OCI-LY7 (cell line): ENCODE measurements at regions of chr1 and their contacts with region 1.

Region 1: GRCh38 chr1:60126723-60127122 is 53.2 kb upstream of the C1orf87 start:
- DNase-seq: no peak
- H3K4me3 ChIP-seq: no peak overlapping the region
- H3K27ac ChIP-seq: no peak overlapping the region
- H3K4me1 ChIP-seq: no peaks in the 10 kb centered on the region
- CTCF ChIP-seq: no peak

Region 2: GRCh38 chr1:58857680-58858673 is 1268.7 kb before region 1 on chr1:
- CTCF ChIA-PET with region 1: no interaction called
- POLR2A ChIA-PET with region 1: interaction called, 12 read pairs
- intact Hi-C with region 1: no loop called
- DNase-seq: peak; percentile 64
- H3K4me3 ChIP-seq: no peak overlapping the region
- H3K27ac ChIP-seq: peak overlapping the region; percentile 18
- H3K4me1 ChIP-seq: peaks cover 16% of the 10 kb centered on the region
- CTCF ChIP-seq: no peak

Region 3: GRCh38 chr1:60185684-60186083 is 59.0 kb after region 1 on chr1:
- CTCF ChIA-PET with region 1: no interaction called
- POLR2A ChIA-PET with region 1: no interaction called
- intact Hi-C with region 1: no loop called
- DNase-seq: no peak
- H3K4me3 ChIP-seq: no peak overlapping the region
- H3K27ac ChIP-seq: no peak overlapping the region
- H3K4me1 ChIP-seq: no peaks in the 10 kb centered on the region
- CTCF ChIP-seq: no peak

Region 4: GRCh38 chr1:60922304-60922703 is 795.6 kb after region 1 on chr1:
- CTCF ChIA-PET with region 1: no interaction called
- POLR2A ChIA-PET with region 1: no interaction called
- intact Hi-C with region 1: no loop called
- DNase-seq: no peak
- H3K4me3 ChIP-seq: no peak overlapping the region
- H3K27ac ChIP-seq: no peak overlapping the region
- H3K4me1 ChIP-seq: no peaks in the 10 kb centered on the region
- CTCF ChIP-seq: no peak